Dendritic cell treated with granulocyte-macrophage colony-stimulating factor and Interleukin-4, amounts not matched to agents 40 ng/mL and 50 ng/mL, for 4 days (primary cell): ENCODE measurements at regions of chr14 and their contacts with region 1.

Region 1: DNA sequence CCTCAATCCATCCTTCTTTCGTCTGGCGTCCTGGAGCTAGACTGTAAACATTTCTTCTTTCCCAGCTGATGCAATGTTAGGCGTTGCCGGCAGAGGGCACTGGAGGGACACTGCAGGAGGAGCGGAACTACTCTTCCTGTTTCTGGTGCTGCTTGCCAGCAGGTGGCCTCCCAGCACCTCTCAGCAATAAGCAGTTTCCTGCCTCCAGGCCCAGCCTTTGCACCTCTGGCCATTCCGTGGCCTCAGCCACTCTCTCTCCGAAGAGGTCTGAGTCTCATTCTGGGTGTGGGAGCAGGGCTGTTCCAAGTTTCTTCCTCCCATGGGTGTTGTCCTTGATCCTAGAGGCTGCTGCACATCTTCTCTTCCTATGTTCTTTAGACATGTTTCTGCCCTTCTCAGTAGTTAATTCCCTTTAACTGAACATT is 7.5 kb upstream of the ASPG start:
- H3K4me3 Mint-ChIP-seq: no peak overlapping the region
- H3K27ac Mint-ChIP-seq: no peak overlapping the region
- H3K4me1 Mint-ChIP-seq: no peaks in the 10 kb centered on the region
- H3K27me3 Mint-ChIP-seq: peaks cover 12% of the 10 kb centered on the region

Region 2: GRCh38 chr14:104130974-104131651 is 53.1 kb after region 1 on chr14:
- intact Hi-C with region 1: loop called (anchors 1 kb)
- H3K4me3 Mint-ChIP-seq: no peak overlapping the region
- H3K27ac Mint-ChIP-seq: no peak overlapping the region
- H3K4me1 Mint-ChIP-seq: peaks cover 6% of the 10 kb centered on the region
- H3K27me3 Mint-ChIP-seq: peaks cover 58% of the 10 kb centered on the region

Region 3: DNA sequence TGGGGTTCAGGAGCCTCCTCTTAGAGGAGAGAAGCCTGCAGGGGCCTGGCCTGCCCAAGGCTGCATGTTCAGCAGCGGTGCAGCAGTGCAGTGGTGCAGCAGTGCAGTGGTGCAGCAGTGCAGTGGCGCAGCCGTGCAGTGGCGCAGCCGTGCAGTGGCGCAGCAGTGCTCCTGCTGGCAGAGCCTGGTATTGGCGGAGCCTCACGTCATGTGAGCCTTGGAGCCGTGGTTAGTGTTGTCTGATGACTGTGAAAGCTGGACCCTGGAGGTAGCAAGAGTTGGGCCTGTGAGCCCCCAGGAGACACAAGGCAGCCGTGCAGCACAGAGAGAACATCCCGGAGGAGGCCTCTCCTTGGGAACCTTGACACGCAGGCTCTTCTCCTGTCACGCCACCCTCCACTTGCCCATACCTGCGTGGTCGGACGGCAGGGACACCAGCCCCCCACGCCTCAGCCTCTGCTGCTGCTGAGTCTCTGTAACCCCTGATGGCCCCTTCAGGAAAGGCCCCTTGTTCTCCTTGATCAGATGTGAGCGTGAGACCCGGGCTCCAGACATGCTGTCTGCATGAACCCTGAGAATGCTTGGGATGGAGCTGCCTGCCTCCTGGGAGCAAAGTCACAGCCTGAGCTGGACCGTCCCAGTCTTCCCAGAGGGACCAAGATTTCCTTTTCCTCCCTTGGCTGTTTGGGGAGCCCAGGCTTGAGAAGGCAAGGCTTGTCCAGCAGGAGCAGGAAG is 254.0 kb after region 1 on chr14:
- intact Hi-C with region 1: no loop called
- H3K4me3 Mint-ChIP-seq: no peak overlapping the region
- H3K27ac Mint-ChIP-seq: no peak overlapping the region
- H3K4me1 Mint-ChIP-seq: no peaks in the 10 kb centered on the region
- H3K27me3 Mint-ChIP-seq: no peaks in the 10 kb centered on the region

Region 4: GRCh38 chr14:104639889-104640548 is 562.0 kb after region 1 on chr14:
- intact Hi-C with region 1: loop called (anchors 2 kb)
- H3K4me3 Mint-ChIP-seq: no peak overlapping the region
- H3K27ac Mint-ChIP-seq: no peak overlapping the region
- H3K4me1 Mint-ChIP-seq: peaks cover 36% of the 10 kb centered on the region
- H3K27me3 Mint-ChIP-seq: peaks cover 36% of the 10 kb centered on the region